CD8-positive, alpha-beta memory T cell (primary cell): ENCODE measurements at regions of chr22 and their contacts with region 1.

Region 1: DNA sequence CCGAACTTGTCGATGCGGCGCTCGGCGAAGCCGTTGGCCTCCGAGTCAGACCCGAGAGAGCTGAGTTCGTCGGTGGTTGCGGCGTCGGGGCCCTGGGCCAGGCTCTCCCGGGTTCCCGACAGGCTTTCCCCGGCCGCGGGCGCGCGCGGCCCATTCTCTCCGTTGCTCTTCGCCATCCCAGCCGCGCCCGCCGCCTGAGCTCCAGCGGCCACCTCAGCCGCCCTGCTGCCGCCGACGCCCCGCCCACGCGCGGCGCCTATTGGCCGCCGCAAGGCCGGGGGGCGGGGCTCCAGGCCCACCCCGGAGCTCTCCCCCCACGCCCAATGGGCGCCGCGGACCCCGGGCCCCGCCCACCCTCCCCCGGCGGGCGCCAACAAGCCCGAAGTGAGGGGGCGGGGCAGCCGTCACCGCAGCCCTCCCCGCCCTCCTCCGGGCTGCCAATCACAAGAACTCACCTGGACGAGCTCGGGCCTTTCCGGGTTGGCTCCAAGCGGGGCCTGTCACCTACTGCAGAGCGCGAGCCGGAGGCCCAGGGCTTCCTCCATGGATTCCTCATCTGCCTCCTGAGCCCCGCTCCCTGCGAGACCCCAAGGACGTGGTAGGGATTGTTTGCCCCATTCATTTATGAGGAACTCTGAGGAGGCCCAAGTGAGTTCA is at the start of gene TBC1D10A:
- DNase-seq: peak; percentile 91 to 96 (median 93)
- H3K4me3 ChIP-seq: peak within 1 kb of the TSS; percentile 86
- H3K4me3 Mint-ChIP-seq: peak within 1 kb of the TSS; percentile 86 to 95 (median 91)
- H3K27ac ChIP-seq: peak within 1 kb of the TSS; percentile 67
- H3K27ac Mint-ChIP-seq: peak within 1 kb of the TSS; percentile 87 to 95 (median 92)
- H3K4me1 ChIP-seq: peaks cover 51% of the 10 kb centered on the region
- H3K4me1 Mint-ChIP-seq: peaks cover 42 to 50% (median 50%) of the 10 kb centered on the region in 3 donors
- H3K27me3 ChIP-seq: no peaks in the 10 kb centered on the region
- H3K27me3 Mint-ChIP-seq: no peaks in the 10 kb centered on the region
- total RNA-seq, gene TBC1D10A: 14.7 to 17.3 TPM

Region 2: DNA sequence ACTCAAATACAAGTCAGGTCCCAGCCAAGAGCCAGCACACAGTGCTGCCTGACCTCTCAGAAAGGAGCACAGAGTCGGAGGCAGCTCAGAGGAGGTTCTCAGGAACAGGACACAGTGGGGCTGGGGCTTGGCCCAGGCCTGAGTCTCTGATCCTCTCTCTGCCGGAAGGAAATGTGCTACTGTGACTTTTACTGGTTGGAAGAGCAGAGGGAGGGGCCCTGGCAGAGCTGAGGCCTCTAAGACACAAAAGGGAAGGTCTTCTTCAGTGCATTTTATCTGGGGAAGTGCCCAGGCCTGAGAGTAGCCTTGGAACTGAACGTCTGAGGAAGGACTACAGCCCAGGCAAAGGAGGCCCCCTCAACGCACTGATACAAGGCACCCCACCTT is 21.3 kb before region 1 on chr22:
- CTCF ChIA-PET with region 1: interaction called, 45 read pairs
- POLR2A ChIA-PET with region 1: interaction called, 71 read pairs
- DNase-seq: peak in 4 of 5 donors; percentile 35 to 68 (median 60)
- H3K4me3 ChIP-seq: peak overlapping the region; percentile 61
- H3K4me3 Mint-ChIP-seq: peak overlapping the region; percentile 64 to 77 (median 69)
- H3K27ac ChIP-seq: peak overlapping the region; percentile 40
- H3K27ac Mint-ChIP-seq: peak overlapping the region; percentile 78 to 99 (median 91)
- H3K4me1 ChIP-seq: peaks cover 99% of the 10 kb centered on the region
- H3K4me1 Mint-ChIP-seq: peaks cover 94 to 100% (median 99%) of the 10 kb centered on the region in 3 donors
- H3K27me3 ChIP-seq: no peaks in the 10 kb centered on the region
- H3K27me3 Mint-ChIP-seq: no peaks in the 10 kb centered on the region

Region 3: DNA sequence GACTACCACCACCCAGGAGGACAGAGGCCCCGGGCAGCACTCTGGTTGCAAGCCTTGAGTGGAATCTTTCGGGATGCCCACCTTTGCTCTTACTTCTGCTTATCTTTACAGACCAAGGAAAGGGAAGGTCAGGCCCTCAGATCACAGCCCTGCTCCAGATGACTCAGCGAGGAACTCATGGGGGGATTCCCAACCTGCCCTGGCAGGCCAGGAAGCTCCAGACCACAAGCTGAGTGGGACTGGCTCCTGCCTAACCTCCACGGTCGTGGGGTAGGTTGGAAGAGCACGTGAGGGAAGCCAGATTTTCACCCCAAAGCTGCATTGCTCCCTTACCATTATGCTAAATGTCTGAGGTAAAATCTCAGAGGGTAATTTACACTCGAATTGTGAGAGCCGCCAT is 11.9 kb before region 1 on chr22:
- CTCF ChIA-PET with region 1: interaction called, 45 read pairs
- POLR2A ChIA-PET with region 1: interaction called, 13 read pairs
- DNase-seq: peak in 4 of 5 donors; percentile 24 to 65 (median 44)
- H3K4me3 ChIP-seq: no peak overlapping the region
- H3K4me3 Mint-ChIP-seq: peak overlapping the region in 4 of 7 donors; percentile 8 to 65 (median 25)
- H3K27ac ChIP-seq: no peak overlapping the region
- H3K27ac Mint-ChIP-seq: peak overlapping the region; percentile 26 to 96 (median 88)
- H3K4me1 ChIP-seq: peaks cover 100% of the 10 kb centered on the region
- H3K4me1 Mint-ChIP-seq: peaks cover 95 to 100% (median 98%) of the 10 kb centered on the region in 3 donors
- H3K27me3 ChIP-seq: no peaks in the 10 kb centered on the region
- H3K27me3 Mint-ChIP-seq: peaks cover 0 to 1% of the 10 kb centered on the region in 2 donors

Region 4: GRCh38 chr22:30344447-30345200 is 17.8 kb after region 1 on chr22:
- CTCF ChIA-PET with region 1: no interaction called
- POLR2A ChIA-PET with region 1: no interaction called
- DNase-seq: no peak
- H3K4me3 ChIP-seq: no peak overlapping the region
- H3K4me3 Mint-ChIP-seq: no peak overlapping the region
- H3K27ac ChIP-seq: no peak overlapping the region
- H3K27ac Mint-ChIP-seq: peak overlapping the region in 4 of 8 donors; percentile 23 to 80 (median 28)
- H3K4me1 ChIP-seq: peaks cover 18% of the 10 kb centered on the region
- H3K4me1 Mint-ChIP-seq: peaks cover 26 to 46% (median 44%) of the 10 kb centered on the region in 3 donors
- H3K27me3 ChIP-seq: no peaks in the 10 kb centered on the region
- H3K27me3 Mint-ChIP-seq: no peaks in the 10 kb centered on the region

Region 5: GRCh38 chr22:30356449-30357235 is 29.8 kb after region 1 on chr22 and contains the starts of genes CCDC157 and SF3A1:
- CTCF ChIA-PET with region 1: interaction called, 3 read pairs
- POLR2A ChIA-PET with region 1: interaction called, 26 read pairs
- DNase-seq: peak; percentile 81 to 89 (median 88)
- H3K4me3 ChIP-seq: peak within 1 kb of the TSS; percentile 96
- H3K4me3 Mint-ChIP-seq: peak within 1 kb of the TSS; percentile 94 to 99 (median 98)
- H3K27ac ChIP-seq: peak within 1 kb of the TSS; percentile 98
- H3K27ac Mint-ChIP-seq: peak within 1 kb of the TSS; percentile 91 to 99 (median 96)
- H3K4me1 ChIP-seq: peaks cover 41% of the 10 kb centered on the region
- H3K4me1 Mint-ChIP-seq: peaks cover 46 to 57% (median 57%) of the 10 kb centered on the region in 3 donors
- H3K27me3 ChIP-seq: no peaks in the 10 kb centered on the region
- H3K27me3 Mint-ChIP-seq: peaks cover 0 to 3% of the 10 kb centered on the region in 2 donors
- total RNA-seq, gene CCDC157: 2.7 to 2.9 TPM
- total RNA-seq, gene SF3A1: 235 to 241 TPM

Region 6: GRCh38 chr22:30649430-30650007 is 322.7 kb after region 1 on chr22:
- CTCF ChIA-PET with region 1: no interaction called
- POLR2A ChIA-PET with region 1: no interaction called
- DNase-seq: peak in 4 of 5 donors; percentile 14 to 83 (median 34)
- H3K4me3 ChIP-seq: no peak overlapping the region
- H3K4me3 Mint-ChIP-seq: no peak overlapping the region
- H3K27ac ChIP-seq: peak overlapping the region; percentile 18
- H3K27ac Mint-ChIP-seq: peak overlapping the region; percentile 21 to 92 (median 70)
- H3K4me1 ChIP-seq: no peaks in the 10 kb centered on the region
- H3K4me1 Mint-ChIP-seq: peaks cover 4 to 22% (median 10%) of the 10 kb centered on the region in 3 donors
- H3K27me3 ChIP-seq: no peaks in the 10 kb centered on the region
- H3K27me3 Mint-ChIP-seq: no peaks in the 10 kb centered on the region